ENCODE measurements at regions of chrX and their contacts with region 1.

Region 1: GRCh38 chrX:136975684-136976470 is 57.9 kb downstream of the GPR101 start:
- DNase-seq: no peak
- H3K4me3 ChIP-seq: no peak overlapping the region
- H3K27ac ChIP-seq: no peak overlapping the region
- H3K4me1 ChIP-seq: no peaks in the 10 kb centered on the region
- H3K27me3 ChIP-seq: no peaks in the 10 kb centered on the region
- CTCF ChIP-seq: no peak
- POLR2A ChIP-seq: no peak

Region 2: GRCh38 chrX:137151403-137151802 is 175.5 kb after region 1 on chrX:
- intact Hi-C with region 1: no loop called
- DNase-seq: no peak
- H3K4me3 ChIP-seq: no peak overlapping the region
- H3K27ac ChIP-seq: no peak overlapping the region
- H3K4me1 ChIP-seq: no peaks in the 10 kb centered on the region
- H3K27me3 ChIP-seq: peaks cover 0 to 20% of the 10 kb centered on the region in 2 donors
- CTCF ChIP-seq: no peak
- POLR2A ChIP-seq: no peak

Region 3: GRCh38 chrX:137313627-137314026 is 337.8 kb after region 1 on chrX:
- intact Hi-C with region 1: loop called (anchors 5 kb)
- DNase-seq: no peak
- H3K4me3 ChIP-seq: no peak overlapping the region
- H3K27ac ChIP-seq: no peak overlapping the region
- H3K4me1 ChIP-seq: no peaks in the 10 kb centered on the region
- H3K27me3 ChIP-seq: peaks cover 0 to 3% of the 10 kb centered on the region in 2 donors
- CTCF ChIP-seq: no peak
- POLR2A ChIP-seq: no peak

Measured in breast epithelium (tissue), 4 donors.